ENCODE measurements at regions of chr3 and their contacts with region 1.

Region 1: DNA sequence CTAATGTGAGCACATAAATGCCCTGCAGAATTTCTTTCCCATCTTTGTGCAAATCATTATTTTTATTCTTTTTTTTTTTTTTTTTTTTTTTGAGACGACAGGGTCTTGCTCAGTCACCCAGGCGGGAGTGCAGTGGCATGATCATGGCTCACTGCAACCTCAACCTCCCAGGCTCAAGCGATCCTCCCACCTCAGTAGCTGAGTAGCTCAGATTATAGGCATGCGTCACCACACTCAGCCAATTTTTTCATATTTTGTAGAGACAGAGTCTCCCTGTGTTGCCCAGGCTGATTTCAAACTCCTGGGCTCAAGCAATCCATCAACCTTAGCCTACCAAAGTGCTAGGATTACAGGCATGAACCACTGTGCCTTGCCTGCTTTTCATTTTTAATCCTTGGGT is 22.9 kb downstream of the DAG1 start:
- DNase-seq: no peak
- ATAC-seq: no peak
- H3K4me3 ChIP-seq: no peak overlapping the region
- H3K4me3 Mint-ChIP-seq: no peak overlapping the region
- H3K27ac ChIP-seq: no peak overlapping the region
- H3K27ac Mint-ChIP-seq: no peak overlapping the region
- H3K4me1 ChIP-seq: no peaks in the 10 kb centered on the region
- H3K4me1 Mint-ChIP-seq: peaks cover 9 to 14% (median 11%) of the 10 kb centered on the region in 3 donors
- H3K27me3 ChIP-seq: no peaks in the 10 kb centered on the region
- H3K27me3 Mint-ChIP-seq: no peaks in the 10 kb centered on the region

Region 2: DNA sequence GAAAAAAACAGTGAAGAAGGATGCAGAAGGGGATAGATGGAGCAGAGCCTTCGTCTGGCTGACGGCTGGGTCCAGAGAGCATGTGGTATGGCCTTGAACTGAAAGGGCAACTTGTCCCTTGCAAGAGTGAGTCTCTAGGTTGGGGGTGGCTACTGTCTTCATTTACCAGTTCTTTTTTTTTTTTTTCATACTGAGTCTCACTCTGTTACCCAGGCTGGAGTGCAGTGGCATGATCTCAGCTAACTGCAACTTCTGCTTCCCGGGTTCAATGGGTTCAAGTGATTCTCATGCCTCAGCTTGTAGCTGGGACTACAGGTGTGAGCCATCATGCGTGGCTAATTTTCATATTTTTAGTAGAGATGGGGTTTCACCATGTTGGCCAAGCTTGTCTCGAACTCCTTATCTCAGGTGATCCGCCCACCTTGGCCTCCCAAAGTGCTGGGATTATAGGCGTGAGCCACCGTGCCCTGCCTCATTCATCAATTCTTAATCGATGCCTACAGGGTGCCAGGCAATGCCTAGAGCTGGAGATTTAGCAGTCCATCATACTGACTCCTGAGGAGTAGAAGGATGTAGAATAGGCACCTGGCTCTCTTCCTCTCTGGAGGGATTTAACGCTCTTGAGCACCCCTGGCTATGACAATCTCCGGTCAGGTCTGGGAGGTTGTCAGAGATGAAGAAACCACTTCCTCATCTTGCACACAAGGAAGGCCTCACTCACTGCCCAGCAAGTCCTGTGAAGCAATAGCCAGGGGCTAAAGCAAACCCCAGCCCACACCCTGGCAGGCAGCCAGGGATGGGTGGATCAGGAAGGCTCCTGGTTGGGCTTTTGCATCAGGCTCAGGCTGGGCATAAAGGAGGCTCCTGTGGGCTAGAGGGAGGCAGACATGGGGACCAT is 1270.1 kb before region 1 on chr3 and contains the start of gene CAMP:
- CTCF ChIA-PET with region 1: interaction called in 1 of 2 experiments, 18 read pairs
- POLR2A ChIA-PET with region 1: no interaction called
- DNase-seq: peak in 10 of 35 experiments; percentile 5 to 53 (median 12)
- ATAC-seq: no peak
- H3K4me3 ChIP-seq: no peak within 1 kb of the TSS
- H3K4me3 Mint-ChIP-seq: no peak within 1 kb of the TSS
- H3K27ac ChIP-seq: no peak within 1 kb of the TSS
- H3K27ac Mint-ChIP-seq: no peak within 1 kb of the TSS
- H3K4me1 ChIP-seq: peaks cover 0 to 2% of the 10 kb centered on the region in 2 experiments
- H3K4me1 Mint-ChIP-seq: peaks cover 7 to 8% (median 7%) of the 10 kb centered on the region in 3 donors
- H3K27me3 ChIP-seq: peaks cover 0 to 14% of the 10 kb centered on the region in 2 experiments
- H3K27me3 Mint-ChIP-seq: peaks cover 0 to 4% of the 10 kb centered on the region in 2 donors
- total RNA-seq, gene CAMP: not detected

Region 3: GRCh38 chr3:50057756-50058155 is 564.8 kb after region 1 on chr3:
- CTCF ChIA-PET with region 1: no interaction called
- POLR2A ChIA-PET with region 1: interaction called in 1 of 2 experiments, 20 read pairs
- DNase-seq: no peak
- ATAC-seq: no peak
- H3K4me3 ChIP-seq: no peak overlapping the region
- H3K4me3 Mint-ChIP-seq: no peak overlapping the region
- H3K27ac ChIP-seq: no peak overlapping the region
- H3K27ac Mint-ChIP-seq: no peak overlapping the region
- H3K4me1 ChIP-seq: no peaks in the 10 kb centered on the region
- H3K4me1 Mint-ChIP-seq: no peaks in the 10 kb centered on the region
- H3K27me3 ChIP-seq: no peaks in the 10 kb centered on the region
- H3K27me3 Mint-ChIP-seq: no peaks in the 10 kb centered on the region